ENCODE measurements at regions of chr7 and their contacts with region 1.

Region 1: GRCh38 chr7:108146070-108146837 is 16.1 kb upstream of the LAMB4 start:
- DNase-seq: peak; percentile 86
- ATAC-seq: peak; percentile 90
- H3K4me3 ChIP-seq: no peak overlapping the region
- H3K27ac ChIP-seq: peak overlapping the region; percentile 12; the same call in 1 of the 2 replicates
- H3K4me1 ChIP-seq: peaks cover 2% of the 10 kb centered on the region; the same call in 1 of the 2 replicates
- H3K27me3 ChIP-seq: no peaks in the 10 kb centered on the region
- CTCF ChIP-seq: peak; percentile 95
- POLR2A ChIP-seq: peak; percentile 54; the same call in 1 of the 2 replicates
- RAD21 ChIP-seq: peak; percentile 99

Region 2: DNA sequence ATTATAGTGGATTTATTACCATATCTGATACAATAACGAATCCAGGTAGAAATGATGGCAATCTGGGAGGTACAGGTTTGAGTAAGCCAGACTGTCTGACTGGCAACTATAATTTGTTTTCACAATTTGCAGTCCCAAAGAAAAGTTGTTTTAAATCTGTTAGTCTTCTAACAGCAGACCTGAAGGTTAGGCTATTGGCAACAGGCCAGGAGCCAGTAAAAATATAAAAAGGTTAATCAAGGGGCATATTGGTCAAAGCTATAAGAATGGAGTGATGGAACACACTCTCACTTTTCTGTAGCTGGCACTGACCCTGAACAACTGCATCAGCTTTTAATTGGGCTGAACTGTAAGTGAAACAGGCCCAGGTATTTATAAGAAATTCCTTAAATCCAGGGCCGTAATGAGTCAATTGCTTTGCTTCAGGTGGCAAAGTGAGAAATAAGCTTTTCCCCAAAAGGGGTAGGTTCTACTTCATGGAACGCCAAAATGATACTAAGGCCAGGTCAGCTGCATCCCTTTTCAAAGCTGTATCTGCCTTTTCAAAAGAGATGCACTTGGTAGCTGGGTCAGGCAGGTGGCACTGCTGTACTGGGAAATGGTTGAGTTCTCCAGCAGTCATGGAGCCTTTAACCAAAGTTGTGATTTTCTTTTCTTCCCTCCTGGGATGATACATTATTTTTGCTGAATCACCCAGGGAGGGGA is 683.4 kb before region 1 on chr7:
- CTCF ChIA-PET with region 1: no interaction called
- POLR2A ChIA-PET with region 1: no interaction called
- dilution Hi-C with region 1: no loop called
- in situ Hi-C with region 1: no loop called
- intact Hi-C with region 1: loop called (anchors 5 kb)
- DNase-seq: peak; percentile 79
- ATAC-seq: peak; percentile 99
- H3K4me3 ChIP-seq: no peak overlapping the region
- H3K27ac ChIP-seq: no peak overlapping the region
- H3K4me1 ChIP-seq: no peaks in the 10 kb centered on the region
- H3K27me3 ChIP-seq: no peaks in the 10 kb centered on the region
- CTCF ChIP-seq: peak; percentile 96
- POLR2A ChIP-seq: peak; percentile 49; the same call in 1 of the 2 replicates
- RAD21 ChIP-seq: peak; percentile 98

Region 3: GRCh38 chr7:107879400-107880035 is 266.7 kb before region 1 on chr7:
- CTCF ChIA-PET with region 1: interaction called, 3 read pairs
- POLR2A ChIA-PET with region 1: interaction called, 4 read pairs
- dilution Hi-C with region 1: no loop called
- in situ Hi-C with region 1: no loop called
- intact Hi-C with region 1: loop called (anchors 1 kb)
- DNase-seq: peak; percentile 69
- ATAC-seq: peak; percentile 92
- H3K4me3 ChIP-seq: no peak overlapping the region
- H3K27ac ChIP-seq: no peak overlapping the region
- H3K4me1 ChIP-seq: no peaks in the 10 kb centered on the region
- H3K27me3 ChIP-seq: peaks cover 13% of the 10 kb centered on the region
- CTCF ChIP-seq: peak; percentile 84
- POLR2A ChIP-seq: no peak
- RAD21 ChIP-seq: peak; percentile 75

Region 4: DNA sequence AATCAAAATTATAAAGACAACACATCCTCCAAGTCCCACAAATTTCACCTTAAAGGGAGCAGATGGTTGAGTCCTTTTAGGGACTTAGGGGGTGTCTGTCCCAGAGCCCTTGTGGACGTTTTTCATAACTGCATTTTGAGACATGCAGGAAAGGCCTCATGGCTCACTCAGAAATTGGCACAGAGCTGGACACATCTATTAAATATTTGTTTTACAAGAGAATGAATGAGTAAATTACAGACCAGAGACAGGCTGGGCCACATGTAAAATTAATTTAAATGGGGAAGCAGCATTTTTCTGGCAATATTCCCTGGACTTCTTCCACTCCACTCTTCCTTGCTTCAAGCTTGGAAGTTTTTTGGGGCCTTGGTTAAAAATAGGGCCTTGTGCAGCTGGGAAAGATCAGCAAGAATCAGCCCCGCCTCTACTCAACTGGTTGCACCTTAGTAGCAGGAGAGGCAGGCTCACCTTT is 163.3 kb before region 1 on chr7:
- CTCF ChIA-PET with region 1: interaction called, 7 read pairs
- POLR2A ChIA-PET with region 1: no interaction called
- dilution Hi-C with region 1: no loop called
- in situ Hi-C with region 1: no loop called
- intact Hi-C with region 1: loop called (anchors 5 kb)
- DNase-seq: peak; percentile 57
- ATAC-seq: peak; percentile 78
- H3K4me3 ChIP-seq: no peak overlapping the region
- H3K27ac ChIP-seq: no peak overlapping the region
- H3K4me1 ChIP-seq: peaks cover 3% of the 10 kb centered on the region
- H3K27me3 ChIP-seq: no peaks in the 10 kb centered on the region
- CTCF ChIP-seq: no peak
- POLR2A ChIP-seq: no peak
- RAD21 ChIP-seq: no peak

Region 5: GRCh38 chr7:108002726-108003598 is 143.3 kb before region 1 on chr7 and contains the start of gene LAMB1:
- CTCF ChIA-PET with region 1: interaction called, 4 read pairs
- POLR2A ChIA-PET with region 1: interaction called, 6 read pairs
- dilution Hi-C with region 1: loop called (anchors 25 kb)
- in situ Hi-C with region 1: no loop called
- intact Hi-C with region 1: loop called (anchors 1 kb)
- DNase-seq: peak; percentile 65
- ATAC-seq: peak; percentile 83
- H3K4me3 ChIP-seq: peak within 1 kb of the TSS; percentile 88
- H3K27ac ChIP-seq: peak within 1 kb of the TSS; percentile 93
- H3K4me1 ChIP-seq: peaks cover 14% of the 10 kb centered on the region
- H3K27me3 ChIP-seq: no peaks in the 10 kb centered on the region
- CTCF ChIP-seq: no peak
- POLR2A ChIP-seq: 0 out of 2 replicates have a peak, but pooled peaks have one; percentile 23
- RAD21 ChIP-seq: no peak
- total RNA-seq, gene LAMB1: 117 TPM in 2 replicates

Region 6: DNA sequence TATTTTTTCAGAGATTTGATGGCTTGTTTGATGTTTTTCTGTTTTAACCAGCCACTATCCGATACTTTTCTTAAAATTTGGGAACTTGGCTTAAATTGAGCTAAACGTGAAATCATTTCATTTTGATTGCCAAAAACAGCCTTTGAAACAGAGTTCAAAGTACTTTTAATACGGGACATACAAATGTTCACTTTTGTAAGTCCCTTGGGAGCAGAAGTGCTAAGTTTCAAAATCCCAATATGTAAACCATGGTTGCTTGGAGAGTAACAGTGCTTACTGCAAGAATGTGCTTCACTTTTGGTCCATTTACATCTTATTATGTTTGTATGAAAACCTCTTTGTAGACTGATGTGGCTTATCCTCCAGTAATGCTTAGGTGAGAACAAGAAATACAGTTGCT is 368.8 kb after region 1 on chr7:
- CTCF ChIA-PET with region 1: no interaction called
- POLR2A ChIA-PET with region 1: interaction called, 12 read pairs
- dilution Hi-C with region 1: no loop called
- in situ Hi-C with region 1: no loop called
- intact Hi-C with region 1: no loop called
- DNase-seq: no peak
- ATAC-seq: no peak
- H3K4me3 ChIP-seq: no peak overlapping the region
- H3K27ac ChIP-seq: no peak overlapping the region
- H3K4me1 ChIP-seq: no peaks in the 10 kb centered on the region
- H3K27me3 ChIP-seq: no peaks in the 10 kb centered on the region
- CTCF ChIP-seq: no peak
- POLR2A ChIP-seq: no peak
- RAD21 ChIP-seq: no peak